Dorsolateral prefrontal cortex (tissue), 120 donors: ENCODE measurements at regions of chr1 and their contacts with region 1.

Region 1: GRCh38 chr1:206489980-206490770 is 17.2 kb upstream of the RASSF5 start:
- DNase-seq: peak; percentile 61 to 84 (median 68)
- H3K4me3 ChIP-seq: no peak overlapping the region
- H3K27ac ChIP-seq: no peak overlapping the region
- H3K27me3 ChIP-seq: no peaks in the 10 kb centered on the region
- CTCF ChIP-seq: peak; percentile 64 to 98 (median 92)

Region 2: DNA sequence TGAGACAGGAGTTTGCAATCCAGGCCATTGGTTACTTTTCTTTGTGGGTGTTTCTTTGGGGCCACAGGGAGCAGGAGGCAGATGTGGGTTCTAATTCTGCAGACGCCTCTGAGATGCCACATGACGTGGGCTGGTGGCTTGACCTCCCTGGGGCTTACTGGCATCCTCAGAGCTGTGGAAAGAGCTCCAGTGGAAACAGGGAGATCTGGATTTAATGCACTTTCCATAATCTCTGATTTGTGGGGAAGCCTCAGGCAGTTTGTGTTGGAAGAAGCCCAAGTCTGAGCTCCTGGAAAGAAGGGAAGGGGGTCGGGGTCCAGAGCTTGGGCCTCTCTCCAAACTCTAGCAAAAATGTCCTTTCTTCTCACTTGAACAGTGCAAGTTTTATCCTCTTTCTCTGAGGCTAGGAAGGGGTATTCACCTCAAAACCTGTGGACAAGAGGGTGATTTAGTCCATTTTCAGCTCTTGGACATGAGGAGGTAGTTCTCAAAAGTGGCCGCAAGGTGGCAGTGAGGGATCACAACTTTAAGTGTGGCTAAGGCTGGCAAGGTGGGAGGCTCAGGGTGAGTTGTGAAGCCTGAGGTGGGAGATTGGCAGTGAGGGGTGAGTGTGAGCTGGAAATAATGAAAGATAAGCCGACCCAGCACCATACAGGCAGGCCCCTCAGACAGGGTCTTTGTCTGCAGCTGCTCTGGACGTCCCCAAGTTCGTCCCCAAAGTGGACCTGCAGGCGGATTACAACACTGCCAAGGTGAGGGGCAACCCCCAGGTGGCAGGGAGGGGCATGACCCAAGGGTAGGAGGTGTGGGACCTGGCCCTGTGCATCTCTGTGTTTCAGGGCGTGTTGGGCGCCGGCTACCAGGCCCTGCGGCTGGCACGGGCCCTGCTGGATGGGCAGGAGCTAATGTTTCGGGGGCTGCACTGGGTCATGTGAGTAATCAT is 10.7 kb before region 1 on chr1:
- intact Hi-C with region 1: no loop called
- DNase-seq: peak in 9 of 10 donors; percentile 52 to 85 (median 73)
- H3K4me3 ChIP-seq: no peak overlapping the region
- H3K27ac ChIP-seq: no peak overlapping the region
- H3K27me3 ChIP-seq: no peaks in the 10 kb centered on the region
- CTCF ChIP-seq: peak; percentile 64 to 89 (median 78)

Region 3: DNA sequence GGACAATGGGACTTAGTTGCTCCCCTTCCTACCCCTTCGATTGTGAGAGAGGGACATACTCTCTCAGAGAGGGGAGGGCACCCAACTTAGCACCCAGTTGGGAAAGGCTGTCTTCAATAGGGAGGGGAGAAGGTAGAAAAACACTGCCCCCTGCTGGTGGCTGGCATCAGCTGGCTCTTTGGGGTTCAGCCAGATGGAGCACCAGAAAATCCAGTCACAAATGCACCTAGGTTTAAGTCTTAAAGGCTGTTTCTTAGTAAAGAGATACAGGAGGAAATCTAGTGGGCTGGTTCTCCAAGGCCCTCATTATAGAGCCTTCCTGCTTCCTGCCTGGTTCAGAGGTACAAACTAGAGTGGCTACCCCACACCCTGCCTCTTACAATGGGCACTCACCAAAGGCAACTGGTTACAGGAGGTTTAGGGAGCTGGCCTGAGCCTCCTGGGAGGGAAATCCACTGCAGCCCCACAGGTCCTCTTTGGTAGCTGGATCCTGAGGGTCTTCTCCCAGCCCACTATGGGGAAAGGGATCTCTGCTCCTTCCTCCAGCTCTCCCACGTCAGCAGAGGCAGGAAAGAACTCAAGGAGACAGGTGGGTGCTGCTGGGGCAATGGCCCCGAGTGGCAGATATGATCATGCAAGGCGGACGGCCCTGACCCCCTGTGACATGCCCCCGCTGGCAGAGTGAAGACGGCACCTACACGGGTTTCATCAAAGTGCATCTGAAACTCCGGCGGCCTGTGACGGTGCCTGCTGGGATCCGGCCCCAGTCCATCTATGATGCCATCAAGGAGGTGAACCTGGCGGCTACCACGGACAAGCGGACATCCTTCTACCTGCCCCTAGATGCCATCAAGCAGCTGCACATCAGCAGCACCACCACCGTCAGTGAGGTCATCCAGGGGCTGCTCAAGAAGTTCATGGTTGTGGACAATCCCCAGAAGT is 93.8 kb after region 1 on chr1:
- intact Hi-C with region 1: loop called (anchors 1 to 5 kb)
- DNase-seq: peak; percentile 69 to 89 (median 79)
- H3K4me3 ChIP-seq: no peak overlapping the region
- H3K27ac ChIP-seq: peak overlapping the region in 4 of 59 donors; percentile 35 to 63 (median 50)
- H3K27me3 ChIP-seq: no peaks in the 10 kb centered on the region
- CTCF ChIP-seq: peak; percentile 78 to 98 (median 95)

Region 4: GRCh38 chr1:206589206-206589605 is 99.0 kb after region 1 on chr1:
- intact Hi-C with region 1: loop called in 1 of 2 experiments (anchors 5 kb)
- DNase-seq: no peak
- H3K4me3 ChIP-seq: no peak overlapping the region
- H3K27ac ChIP-seq: no peak overlapping the region
- H3K27me3 ChIP-seq: no peaks in the 10 kb centered on the region
- CTCF ChIP-seq: no peak

Region 5: DNA sequence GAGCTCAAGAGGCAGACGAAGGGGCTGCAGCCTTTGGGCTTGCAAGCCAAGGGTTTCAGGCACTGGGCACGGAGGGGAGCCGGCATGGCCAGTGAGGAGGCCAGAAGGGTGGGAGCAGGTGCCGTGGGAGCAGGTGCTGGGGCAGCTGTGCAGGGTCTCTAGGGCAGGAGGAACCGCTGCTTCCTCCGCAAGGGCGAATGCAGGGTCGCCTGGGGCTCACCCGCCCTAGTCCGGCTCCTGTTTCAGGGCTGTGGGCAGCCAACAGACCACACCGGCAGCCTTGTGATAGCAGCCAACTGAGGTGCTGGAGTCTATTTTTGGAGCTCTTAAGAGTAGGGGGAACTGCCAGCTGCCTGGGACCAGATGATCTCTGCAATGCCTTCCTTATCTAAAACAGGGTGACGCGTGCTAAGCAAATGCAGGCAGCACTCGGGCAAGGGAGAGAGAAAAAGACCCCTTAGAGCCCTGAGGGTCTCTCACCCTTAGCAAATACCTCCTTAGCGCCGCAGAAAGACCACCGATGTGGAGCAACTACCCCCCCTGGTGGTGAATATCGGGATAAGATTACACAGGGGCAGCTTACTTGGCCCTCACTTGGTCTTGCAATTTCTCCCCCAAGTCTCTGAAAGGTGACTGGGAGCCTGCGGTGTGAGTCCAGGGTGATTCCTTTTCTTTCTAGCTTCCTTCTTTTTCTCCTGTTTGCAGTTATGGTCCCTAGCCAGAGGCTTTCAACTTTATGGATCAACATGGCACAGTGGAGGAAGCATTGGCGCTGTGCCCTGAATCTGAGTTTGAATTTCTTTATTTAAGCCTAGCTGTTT is 173.9 kb after region 1 on chr1:
- intact Hi-C with region 1: loop called in 1 of 2 experiments (anchors 5 kb)
- DNase-seq: peak in 6 of 10 donors; percentile 39 to 58 (median 52)
- H3K4me3 ChIP-seq: peak overlapping the region in 51 of 59 donors; percentile 3 to 56 (median 34)
- H3K27ac ChIP-seq: peak overlapping the region in 3 of 59 donors; percentile 17 to 50 (median 38)
- H3K27me3 ChIP-seq: peaks cover 0 to 12% (median 0%) of the 10 kb centered on the region in 45 donors
- CTCF ChIP-seq: peak; percentile 74 to 96 (median 86)

Region 6: GRCh38 chr1:206912445-206913095 is 422.4 kb after region 1 on chr1:
- intact Hi-C with region 1: loop called (anchors 5 to 10 kb)
- DNase-seq: peak; percentile 40 to 83 (median 70)
- H3K4me3 ChIP-seq: no peak overlapping the region
- H3K27ac ChIP-seq: no peak overlapping the region
- H3K27me3 ChIP-seq: peaks cover 0 to 40% (median 22%) of the 10 kb centered on the region in 45 donors
- CTCF ChIP-seq: peak; percentile 70 to 98 (median 93)